GM13976 (cell line): ENCODE measurements at regions of chr3 and their contacts with region 1.

Region 1: DNA sequence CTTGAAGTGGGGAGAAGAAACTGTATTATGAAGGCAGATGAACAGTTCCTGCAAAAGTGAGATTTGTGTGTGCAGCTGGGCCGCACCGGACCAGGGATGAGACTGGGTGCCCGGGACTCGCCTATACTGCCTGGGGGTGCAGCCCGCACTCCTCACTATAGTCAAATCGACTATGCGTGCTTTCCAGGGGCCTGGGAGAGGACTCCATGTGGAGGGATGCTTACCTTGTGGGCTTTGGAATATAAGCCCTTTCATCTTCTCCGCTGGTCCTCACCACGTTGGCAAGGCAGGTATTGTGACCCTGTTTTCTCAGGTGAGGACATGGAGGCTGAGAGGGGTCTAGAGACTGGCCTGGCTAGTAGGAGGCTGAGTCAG is 33.0 kb upstream of the APOD start:
- DNase-seq: peak; percentile 23
- CTCF ChIP-seq: no peak

Region 2: DNA sequence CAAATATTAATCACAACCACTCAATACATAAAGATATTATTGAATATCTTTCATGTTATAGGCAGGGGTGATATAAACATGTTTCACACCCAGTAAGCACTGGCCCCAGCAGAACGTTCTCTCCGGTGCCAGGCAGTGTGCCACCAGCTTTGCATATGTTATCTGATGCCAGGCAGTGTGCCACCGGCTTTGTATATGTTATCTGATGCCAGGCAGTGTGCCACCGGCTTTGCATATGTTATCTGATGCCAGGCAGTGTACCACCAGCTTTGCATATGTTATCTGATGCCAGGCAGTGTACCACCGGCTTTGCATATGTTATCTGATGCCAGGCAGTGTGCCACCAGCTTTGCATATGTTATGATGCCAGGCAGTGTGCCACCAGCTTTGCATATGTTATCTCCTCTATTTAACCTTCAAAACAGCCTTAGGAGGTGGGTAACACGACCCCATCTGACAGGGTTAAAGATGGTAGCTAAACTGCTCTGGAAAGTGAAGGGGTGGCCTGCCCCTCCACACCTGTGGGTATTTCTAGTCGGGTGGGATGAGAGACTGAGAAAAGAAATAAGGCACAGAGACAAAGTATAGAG is 111.0 kb after region 1 on chr3:
- in situ Hi-C with region 1: loop called (anchors 5 kb)
- DNase-seq: no peak
- CTCF ChIP-seq: no peak